Caco-2 (cell line): ENCODE measurements at regions of chr11 and their contacts with region 1.

Region 1: DNA sequence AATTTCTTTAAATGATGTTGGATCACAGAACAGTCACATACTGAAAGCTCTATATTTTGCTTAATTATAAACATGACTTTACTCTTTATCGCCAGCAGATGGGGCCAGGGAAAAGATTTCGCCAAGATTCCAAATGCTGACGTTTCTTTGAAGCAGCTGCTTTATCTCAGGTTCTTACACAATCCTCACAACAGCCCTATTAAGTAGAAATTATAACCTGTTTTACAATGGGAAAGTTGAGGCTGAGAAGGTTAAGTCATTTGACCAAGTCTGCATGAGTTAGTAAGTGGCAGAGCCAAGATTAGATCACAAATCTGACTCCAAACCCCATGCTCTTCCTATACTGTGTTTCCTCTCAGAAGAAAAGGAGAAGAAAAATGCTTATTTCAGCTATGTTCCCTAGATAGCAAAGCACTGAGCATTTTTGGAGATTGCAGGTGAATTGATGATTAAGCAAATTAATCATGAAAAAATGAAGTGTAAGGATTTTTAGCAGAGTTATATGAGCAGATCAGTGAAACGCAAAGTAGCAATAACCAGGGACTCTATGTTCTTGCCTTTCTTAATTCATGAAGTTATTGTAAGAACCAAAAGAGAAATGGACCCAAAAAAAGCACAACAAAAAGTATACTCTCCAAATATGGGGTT is 79.0 kb downstream of the AASDHPPT start:
- DNase-seq: peak; percentile 64 to 71
- H3K4me3 ChIP-seq: no peak overlapping the region
- H3K4me3 Mint-ChIP-seq: no peak overlapping the region
- H3K27ac Mint-ChIP-seq: peak overlapping the region; percentile 52
- H3K4me1 ChIP-seq: peaks cover 5% of the 10 kb centered on the region
- H3K4me1 Mint-ChIP-seq: peaks cover 16% of the 10 kb centered on the region
- H3K27me3 ChIP-seq: no peaks in the 10 kb centered on the region
- H3K27me3 Mint-ChIP-seq: no peaks in the 10 kb centered on the region
- CTCF ChIP-seq: peak; percentile 69 to 71

Region 2: DNA sequence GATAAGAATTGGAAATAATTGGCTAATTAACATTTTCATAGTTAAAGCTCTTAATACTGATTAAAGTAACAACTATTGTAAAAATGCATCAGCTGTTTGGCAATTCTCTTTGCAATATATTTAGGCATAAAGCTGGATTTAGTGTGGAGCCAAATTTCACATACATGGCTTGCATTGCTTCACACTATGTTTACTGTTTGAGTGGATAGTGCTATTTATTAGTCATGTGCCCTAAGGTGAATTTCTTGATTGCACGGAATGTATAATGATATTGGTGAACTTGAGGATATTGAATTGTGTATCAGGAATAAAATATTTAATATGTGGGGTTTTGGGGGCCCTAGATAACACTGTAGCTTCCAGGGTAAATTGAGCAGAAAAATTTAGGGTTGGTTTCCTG is 21.9 kb after region 1 on chr11:
- CTCF ChIA-PET with region 1: interaction called, 4 read pairs
- POLR2A ChIA-PET with region 1: no interaction called
- intact Hi-C with region 1: loop called (anchors 1 kb)
- DNase-seq: no peak
- H3K4me3 ChIP-seq: no peak overlapping the region
- H3K4me3 Mint-ChIP-seq: no peak overlapping the region
- H3K27ac Mint-ChIP-seq: no peak overlapping the region
- H3K4me1 ChIP-seq: peaks cover 11% of the 10 kb centered on the region; the same call in 1 of the 2 replicates
- H3K4me1 Mint-ChIP-seq: peaks cover 7% of the 10 kb centered on the region
- H3K27me3 ChIP-seq: no peaks in the 10 kb centered on the region
- H3K27me3 Mint-ChIP-seq: no peaks in the 10 kb centered on the region
- CTCF ChIP-seq: no peak

Region 3: DNA sequence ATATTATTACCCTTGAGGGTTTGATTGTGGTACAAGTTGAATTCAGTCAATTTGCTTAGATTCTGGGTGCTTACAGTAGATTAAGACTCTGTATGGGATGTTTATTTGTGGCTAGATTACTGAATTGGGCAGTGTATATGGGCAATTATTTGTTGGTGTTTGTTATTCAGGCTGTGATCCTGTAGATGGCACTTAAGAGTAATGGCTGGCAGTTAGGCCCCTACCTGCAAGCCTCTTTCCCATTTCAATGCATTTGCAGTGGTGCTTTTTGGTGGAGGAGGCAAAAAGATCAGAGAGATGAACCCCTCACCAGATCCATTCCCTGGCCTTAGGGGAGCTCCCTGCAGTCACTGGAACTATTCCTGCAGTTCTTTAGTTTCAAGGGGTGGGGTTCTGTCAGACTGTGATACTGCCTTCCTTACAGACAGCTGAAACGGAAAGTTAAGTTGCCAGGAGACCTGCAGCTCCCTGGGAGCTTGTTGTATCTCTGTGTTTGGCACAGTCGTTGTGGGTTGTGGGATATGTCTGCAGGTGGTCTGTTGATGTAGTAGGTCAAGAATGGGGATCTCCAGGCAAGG is 120.5 kb after region 1 on chr11:
- CTCF ChIA-PET with region 1: no interaction called
- POLR2A ChIA-PET with region 1: no interaction called
- intact Hi-C with region 1: loop called (anchors 1 kb)
- DNase-seq: peak; percentile 48 to 49
- H3K4me3 ChIP-seq: no peak overlapping the region
- H3K4me3 Mint-ChIP-seq: no peak overlapping the region
- H3K27ac Mint-ChIP-seq: peak overlapping the region; percentile 46
- H3K4me1 ChIP-seq: peaks cover 14% of the 10 kb centered on the region; the same call in 1 of the 2 replicates
- H3K4me1 Mint-ChIP-seq: peaks cover 20% of the 10 kb centered on the region
- H3K27me3 ChIP-seq: no peaks in the 10 kb centered on the region
- H3K27me3 Mint-ChIP-seq: no peaks in the 10 kb centered on the region
- CTCF ChIP-seq: peak; percentile 46 to 63

Region 4: GRCh38 chr11:106585061-106585460 is 428.6 kb after region 1 on chr11:
- CTCF ChIA-PET with region 1: interaction called, 3 read pairs
- POLR2A ChIA-PET with region 1: no interaction called
- intact Hi-C with region 1: loop called (anchors 1 kb)
- DNase-seq: peak; percentile 25 to 40
- H3K4me3 ChIP-seq: no peak overlapping the region
- H3K4me3 Mint-ChIP-seq: no peak overlapping the region
- H3K27ac Mint-ChIP-seq: no peak overlapping the region
- H3K4me1 ChIP-seq: 0 out of 2 replicates have a peak, but pooled peaks cover 3% of the 10 kb centered on the region
- H3K4me1 Mint-ChIP-seq: no peaks in the 10 kb centered on the region
- H3K27me3 ChIP-seq: no peaks in the 10 kb centered on the region
- H3K27me3 Mint-ChIP-seq: no peaks in the 10 kb centered on the region
- CTCF ChIP-seq: no peak

Region 5: DNA sequence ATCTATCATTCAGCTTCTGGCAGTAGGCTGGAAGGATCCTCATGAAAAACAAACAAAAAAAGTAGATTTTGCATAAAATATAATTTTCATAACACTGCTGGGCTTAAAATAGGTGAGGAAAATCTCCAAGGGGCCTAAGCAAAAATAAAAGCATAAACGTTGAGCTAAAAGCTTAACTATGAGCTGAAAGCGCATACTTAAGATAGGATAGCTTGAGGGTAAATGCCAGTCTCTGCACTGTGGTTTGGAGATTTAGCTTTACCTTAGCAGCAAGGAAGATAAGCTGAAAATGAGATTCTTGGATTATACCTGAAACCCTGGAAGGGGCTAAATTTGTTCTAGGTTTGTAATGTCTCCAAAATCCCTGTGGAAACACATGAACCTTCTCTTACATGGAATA is 678.2 kb after region 1 on chr11:
- CTCF ChIA-PET with region 1: interaction called, 3 read pairs
- POLR2A ChIA-PET with region 1: no interaction called
- intact Hi-C with region 1: loop called (anchors 10 kb)
- DNase-seq: peak in 1 of 2 experiments; percentile 17
- H3K4me3 ChIP-seq: no peak overlapping the region
- H3K4me3 Mint-ChIP-seq: no peak overlapping the region
- H3K27ac Mint-ChIP-seq: no peak overlapping the region
- H3K4me1 ChIP-seq: peaks cover 35% of the 10 kb centered on the region
- H3K4me1 Mint-ChIP-seq: peaks cover 15% of the 10 kb centered on the region
- H3K27me3 ChIP-seq: no peaks in the 10 kb centered on the region
- H3K27me3 Mint-ChIP-seq: no peaks in the 10 kb centered on the region
- CTCF ChIP-seq: no peak